ENCODE measurements at regions of chr9 and their contacts with region 1.

Region 1: GRCh38 chr9:99579964-99580363 is 241.7 kb upstream of the NR4A3 start:
- DNase-seq: no peak
- H3K4me3 ChIP-seq: no peak overlapping the region
- H3K27ac ChIP-seq: no peak overlapping the region
- H3K4me1 ChIP-seq: no peaks in the 10 kb centered on the region
- H3K27me3 ChIP-seq: no peaks in the 10 kb centered on the region
- CTCF ChIP-seq: no peak
- POLR2A ChIP-seq: no peak

Region 2: GRCh38 chr9:98709968-98710965 is 869.7 kb before region 1 on chr9:
- intact Hi-C with region 1: loop called (anchors 5 kb)
- DNase-seq: no peak
- H3K4me3 ChIP-seq: no peak overlapping the region
- H3K27ac ChIP-seq: no peak overlapping the region
- H3K4me1 ChIP-seq: peaks cover 16% of the 10 kb centered on the region
- H3K27me3 ChIP-seq: no peaks in the 10 kb centered on the region
- CTCF ChIP-seq: no peak
- POLR2A ChIP-seq: no peak

Measured in vagina (tissue), 2 donors.